ENCODE measurements at regions of chr20 and their contacts with region 1.

Region 1: GRCh38 chr20:19784511-19785172 is 26.6 kb downstream of the RIN2 start:
- DNase-seq: peak in 1 of 2 donors; percentile 70
- ATAC-seq: peak; percentile 93
- H3K4me3 ChIP-seq: no peak overlapping the region
- H3K27ac ChIP-seq: no peak overlapping the region
- H3K4me1 ChIP-seq: peaks cover 0 to 3% of the 10 kb centered on the region in 2 donors
- H3K27me3 ChIP-seq: no peaks in the 10 kb centered on the region

Region 2: GRCh38 chr20:19995220-19995863 is 210.7 kb after region 1 on chr20:
- intact Hi-C with region 1: loop called (anchors 1 kb)
- DNase-seq: no peak
- ATAC-seq: peak; percentile 75
- H3K4me3 ChIP-seq: no peak overlapping the region
- H3K27ac ChIP-seq: no peak overlapping the region
- H3K4me1 ChIP-seq: peaks cover 1 to 5% of the 10 kb centered on the region in 2 donors
- H3K27me3 ChIP-seq: no peaks in the 10 kb centered on the region

Measured in aorta (tissue), 5 donors.